ENCODE measurements at regions of chr10 and their contacts with region 1.

Region 1: DNA sequence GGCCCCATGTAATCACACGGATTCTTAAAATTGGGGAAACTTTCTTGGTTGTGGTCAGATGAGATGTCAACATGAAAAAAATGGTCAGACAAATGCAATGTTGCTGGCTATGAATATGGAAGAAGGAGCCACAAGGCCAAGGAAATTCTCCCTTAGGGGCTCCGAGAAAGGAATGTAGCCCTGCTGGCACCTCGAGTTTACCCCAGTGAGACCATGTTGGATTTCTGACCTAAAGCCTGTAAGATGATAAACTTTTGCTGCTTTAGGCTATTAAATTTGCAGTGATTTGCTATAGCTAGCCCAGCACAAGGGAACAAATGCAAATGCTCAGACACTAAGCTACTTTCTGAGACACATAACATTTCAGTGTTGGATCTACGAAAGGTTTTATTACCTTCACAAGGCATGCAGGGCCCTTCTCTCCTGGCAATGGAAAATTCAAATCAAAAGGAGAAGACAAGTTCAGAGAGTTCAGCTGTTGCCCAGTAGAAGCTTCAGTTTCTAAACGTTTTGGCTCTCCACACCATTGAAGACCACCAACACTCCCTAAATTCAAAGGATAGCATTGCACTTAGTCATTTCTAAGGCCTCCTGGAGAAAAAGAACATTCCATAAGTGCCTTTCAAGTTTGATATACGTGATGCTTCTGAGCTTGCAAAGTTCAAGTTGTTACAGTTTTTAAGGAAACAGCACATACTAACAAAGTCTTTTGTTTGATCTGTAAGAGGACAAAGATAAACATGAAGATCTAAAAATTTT is 23.4 kb downstream of the MCMBP start:
- DNase-seq: peak; percentile 76
- ATAC-seq: peak; percentile 91
- H3K4me3 ChIP-seq: no peak overlapping the region
- H3K27ac ChIP-seq: peak overlapping the region; percentile 79
- H3K4me1 ChIP-seq: peaks cover 10% of the 10 kb centered on the region
- H3K27me3 ChIP-seq: no peaks in the 10 kb centered on the region
- CTCF ChIP-seq: no peak
- POLR2A ChIP-seq: no peak
- RAD21 ChIP-seq: no peak

Region 2: GRCh38 chr10:119233123-119233820 is 615.9 kb before region 1 on chr10:
- CTCF ChIA-PET with region 1: no interaction called
- POLR2A ChIA-PET with region 1: no interaction called
- dilution Hi-C with region 1: no loop called
- in situ Hi-C with region 1: no loop called
- intact Hi-C with region 1: no loop called
- DNase-seq: peak; percentile 43
- ATAC-seq: peak; percentile 7; the same call in 1 of the 2 replicates
- H3K4me3 ChIP-seq: no peak overlapping the region
- H3K27ac ChIP-seq: peak overlapping the region; percentile 56
- H3K4me1 ChIP-seq: peaks cover 31% of the 10 kb centered on the region
- H3K27me3 ChIP-seq: no peaks in the 10 kb centered on the region
- CTCF ChIP-seq: no peak
- POLR2A ChIP-seq: no peak
- RAD21 ChIP-seq: no peak

Region 3: GRCh38 chr10:119829429-119829828 is 19.8 kb before region 1 on chr10:
- CTCF ChIA-PET with region 1: no interaction called
- POLR2A ChIA-PET with region 1: no interaction called
- dilution Hi-C with region 1: no loop called
- in situ Hi-C with region 1: no loop called
- intact Hi-C with region 1: loop called (anchors 2 kb)
- DNase-seq: no peak
- ATAC-seq: no peak
- H3K4me3 ChIP-seq: no peak overlapping the region
- H3K27ac ChIP-seq: no peak overlapping the region
- H3K4me1 ChIP-seq: no peaks in the 10 kb centered on the region
- H3K27me3 ChIP-seq: no peaks in the 10 kb centered on the region
- CTCF ChIP-seq: no peak
- POLR2A ChIP-seq: no peak
- RAD21 ChIP-seq: no peak

Region 4: GRCh38 chr10:120017733-120018417 is 168.7 kb after region 1 on chr10:
- CTCF ChIA-PET with region 1: no interaction called
- POLR2A ChIA-PET with region 1: no interaction called
- dilution Hi-C with region 1: no loop called
- in situ Hi-C with region 1: no loop called
- intact Hi-C with region 1: no loop called
- DNase-seq: no peak
- ATAC-seq: no peak
- H3K4me3 ChIP-seq: no peak overlapping the region
- H3K27ac ChIP-seq: no peak overlapping the region
- H3K4me1 ChIP-seq: no peaks in the 10 kb centered on the region
- H3K27me3 ChIP-seq: no peaks in the 10 kb centered on the region
- CTCF ChIP-seq: no peak
- POLR2A ChIP-seq: no peak
- RAD21 ChIP-seq: no peak

Measured in IMR-90 (cell line).